Vagina (tissue), 2 donors: ENCODE measurements at regions of chr12 and their contacts with region 1.

Region 1: DNA sequence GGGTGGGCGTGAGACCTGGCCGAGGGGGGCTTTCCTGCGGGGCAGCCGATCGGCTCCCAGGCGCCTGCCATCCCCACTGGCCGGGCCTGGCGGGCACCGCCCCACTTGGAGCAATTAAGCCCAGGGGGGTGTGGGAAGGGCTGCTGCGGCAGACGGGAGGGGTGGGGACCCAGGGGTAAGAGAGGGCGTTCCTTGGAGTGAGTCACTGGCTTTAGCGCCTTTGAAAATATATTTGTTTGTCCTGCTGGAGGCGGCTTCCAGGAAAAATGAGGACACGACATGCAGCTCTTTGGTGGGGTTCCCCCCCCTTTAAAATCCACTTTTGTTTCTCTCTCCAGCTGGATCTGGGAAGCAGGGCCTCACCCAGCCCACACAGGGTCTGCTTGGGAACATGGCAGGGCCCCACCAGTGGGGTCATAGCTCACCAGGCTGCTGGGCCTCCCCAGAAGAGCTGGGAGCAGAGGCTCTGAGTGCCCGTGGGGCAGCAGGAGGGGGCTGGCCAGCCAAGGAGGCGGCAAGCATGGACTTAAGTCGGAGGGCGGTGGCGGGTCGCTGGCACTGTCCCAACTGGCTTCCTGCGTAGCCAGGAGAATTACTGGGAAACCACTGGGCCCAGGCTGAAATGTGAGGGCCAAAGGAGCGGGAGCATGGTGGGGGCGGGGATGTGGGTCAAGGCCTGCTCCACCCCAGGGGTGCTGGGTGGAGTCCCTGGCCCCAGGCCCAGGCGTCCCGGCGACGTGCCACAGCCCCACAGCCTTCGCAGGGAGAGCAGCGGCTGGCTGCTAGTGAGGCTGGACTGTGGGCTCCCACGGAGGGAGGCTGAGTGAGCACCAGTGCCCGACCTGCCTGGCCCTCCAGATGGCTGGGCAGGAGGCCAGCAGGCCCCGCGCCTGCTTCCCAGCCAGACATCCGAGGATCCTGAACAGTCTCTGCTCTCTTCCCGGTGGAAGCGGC is 128.0 kb downstream of the RFLNA start:
- DNase-seq: peak in 1 of 2 donors; percentile 98
- H3K4me3 ChIP-seq: peak overlapping the region; percentile 27 to 34
- H3K27ac ChIP-seq: peak overlapping the region; percentile 89
- H3K4me1 ChIP-seq: peaks cover 53% of the 10 kb centered on the region
- H3K27me3 ChIP-seq: no peaks in the 10 kb centered on the region
- CTCF ChIP-seq: no peak
- POLR2A ChIP-seq: no peak

Region 2: GRCh38 chr12:124321040-124321481 is 101.8 kb before region 1 on chr12:
- intact Hi-C with region 1: no loop called
- DNase-seq: no peak
- H3K4me3 ChIP-seq: no peak overlapping the region
- H3K27ac ChIP-seq: no peak overlapping the region
- H3K4me1 ChIP-seq: no peaks in the 10 kb centered on the region
- H3K27me3 ChIP-seq: no peaks in the 10 kb centered on the region
- CTCF ChIP-seq: peak; percentile 72 to 89 (median 73)
- POLR2A ChIP-seq: no peak

Region 3: DNA sequence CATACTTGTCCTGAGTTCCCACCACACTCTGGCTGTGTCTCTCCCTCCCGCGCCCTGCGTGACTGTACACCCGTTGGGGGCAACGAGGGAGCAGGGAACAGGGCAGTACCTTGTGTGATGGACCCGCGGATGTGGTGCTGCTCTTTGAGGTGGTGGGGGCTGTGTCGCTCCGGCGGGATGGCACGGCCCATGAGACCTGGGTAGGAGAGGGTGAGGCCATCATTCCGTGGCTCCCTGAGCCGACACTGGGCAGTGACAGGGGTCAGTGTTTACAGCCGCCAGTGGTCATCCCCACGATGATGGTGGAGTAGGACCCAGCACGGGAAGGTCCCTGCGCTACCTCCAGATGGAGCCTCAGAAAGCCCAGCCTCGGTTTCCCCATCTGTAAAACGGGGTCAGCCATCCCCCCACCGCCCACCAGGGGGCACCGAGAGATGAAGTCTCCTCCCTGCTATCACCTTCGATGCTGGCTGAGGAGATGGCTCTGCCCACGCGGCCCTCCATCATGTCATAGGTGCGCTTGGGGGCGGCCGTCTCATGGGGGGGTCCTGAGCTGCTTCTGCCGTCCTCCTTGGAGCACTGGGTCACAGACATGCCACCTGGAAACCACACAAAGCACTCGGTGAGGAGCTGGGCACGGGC is 75.0 kb before region 1 on chr12:
- intact Hi-C with region 1: no loop called
- DNase-seq: no peak
- H3K4me3 ChIP-seq: no peak overlapping the region
- H3K27ac ChIP-seq: no peak overlapping the region
- H3K4me1 ChIP-seq: peaks cover 3% of the 10 kb centered on the region
- H3K27me3 ChIP-seq: no peaks in the 10 kb centered on the region
- CTCF ChIP-seq: peak; percentile 25 to 48 (median 36)
- POLR2A ChIP-seq: no peak

Region 4: DNA sequence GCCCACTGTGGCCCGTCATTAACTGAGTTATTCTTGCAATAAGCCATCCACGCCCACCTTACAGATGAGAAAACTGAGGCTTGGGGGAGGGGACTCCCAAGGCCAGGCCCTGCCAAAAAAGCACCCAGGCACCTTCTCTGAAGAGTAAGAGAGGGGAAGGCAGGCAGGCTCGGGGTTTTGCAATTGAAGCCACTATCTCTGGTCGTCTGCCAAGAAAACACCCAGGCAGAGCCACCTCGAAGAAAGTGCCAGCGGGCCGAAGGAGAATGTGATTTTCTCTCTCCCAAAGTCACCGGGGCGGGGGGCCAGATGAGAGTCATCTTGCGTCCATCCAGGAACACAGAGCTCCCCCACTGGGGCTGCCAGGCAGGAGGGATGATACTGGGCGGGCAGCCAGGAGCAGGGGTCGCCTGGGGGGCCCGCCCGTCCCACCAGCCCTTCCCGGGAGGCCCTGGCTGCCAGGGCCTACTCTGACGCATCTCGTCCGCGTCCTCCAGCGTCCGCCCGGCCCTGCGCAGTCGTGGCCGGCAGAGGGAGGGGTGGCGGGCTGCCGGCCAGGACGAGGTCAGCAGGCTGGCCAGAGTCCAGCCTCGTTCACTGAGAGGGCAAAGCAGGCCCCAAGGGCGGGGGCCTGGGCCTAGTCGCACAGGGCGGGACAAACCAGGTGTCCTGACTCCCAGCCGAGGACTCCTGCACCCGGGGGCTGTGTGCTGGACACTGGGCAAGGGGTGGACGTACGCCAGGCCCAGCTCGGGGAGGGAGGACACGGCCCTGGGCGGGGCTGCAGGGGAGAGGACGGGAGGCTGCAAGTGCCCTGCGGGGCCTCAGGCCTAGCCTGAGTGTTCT is 53.6 kb before region 1 on chr12:
- intact Hi-C with region 1: loop called (anchors 10 kb)
- DNase-seq: no peak
- H3K4me3 ChIP-seq: peak overlapping the region in 1 of 2 donors; percentile 10
- H3K27ac ChIP-seq: peak overlapping the region; percentile 85
- H3K4me1 ChIP-seq: peaks cover 68% of the 10 kb centered on the region
- H3K27me3 ChIP-seq: no peaks in the 10 kb centered on the region
- CTCF ChIP-seq: peak in 1 of 3 experiments; percentile 52
- POLR2A ChIP-seq: no peak

Region 5: GRCh38 chr12:124388679-124389536 is 33.9 kb before region 1 on chr12:
- intact Hi-C with region 1: loop called (anchors 5 kb)
- DNase-seq: no peak
- H3K4me3 ChIP-seq: peak overlapping the region; percentile 56 to 59
- H3K27ac ChIP-seq: peak overlapping the region; percentile 89
- H3K4me1 ChIP-seq: peaks cover 90% of the 10 kb centered on the region
- H3K27me3 ChIP-seq: no peaks in the 10 kb centered on the region
- CTCF ChIP-seq: no peak
- POLR2A ChIP-seq: peak in 1 of 2 donors; percentile 47